ENCODE measurements at regions of chr1 and their contacts with region 1.

Region 1: GRCh38 chr1:9784508-9785133 is 39.1 kb downstream of the CLSTN1 start:
- DNase-seq: peak; percentile 34 to 74
- ATAC-seq: peak; percentile 66 to 72; a peak in 4 of 6 replicates
- H3K4me3 ChIP-seq: no peak overlapping the region
- H3K27ac ChIP-seq: no peak overlapping the region
- H3K4me1 ChIP-seq: peaks cover 9% of the 10 kb centered on the region; the same call in 1 of the 3 replicates
- CTCF ChIP-seq: peak; percentile 68
- EP300 ChIP-seq: no peak
- POLR2A ChIP-seq: no peak
- RAD21 ChIP-seq: peak; percentile 77 to 80

Region 2: DNA sequence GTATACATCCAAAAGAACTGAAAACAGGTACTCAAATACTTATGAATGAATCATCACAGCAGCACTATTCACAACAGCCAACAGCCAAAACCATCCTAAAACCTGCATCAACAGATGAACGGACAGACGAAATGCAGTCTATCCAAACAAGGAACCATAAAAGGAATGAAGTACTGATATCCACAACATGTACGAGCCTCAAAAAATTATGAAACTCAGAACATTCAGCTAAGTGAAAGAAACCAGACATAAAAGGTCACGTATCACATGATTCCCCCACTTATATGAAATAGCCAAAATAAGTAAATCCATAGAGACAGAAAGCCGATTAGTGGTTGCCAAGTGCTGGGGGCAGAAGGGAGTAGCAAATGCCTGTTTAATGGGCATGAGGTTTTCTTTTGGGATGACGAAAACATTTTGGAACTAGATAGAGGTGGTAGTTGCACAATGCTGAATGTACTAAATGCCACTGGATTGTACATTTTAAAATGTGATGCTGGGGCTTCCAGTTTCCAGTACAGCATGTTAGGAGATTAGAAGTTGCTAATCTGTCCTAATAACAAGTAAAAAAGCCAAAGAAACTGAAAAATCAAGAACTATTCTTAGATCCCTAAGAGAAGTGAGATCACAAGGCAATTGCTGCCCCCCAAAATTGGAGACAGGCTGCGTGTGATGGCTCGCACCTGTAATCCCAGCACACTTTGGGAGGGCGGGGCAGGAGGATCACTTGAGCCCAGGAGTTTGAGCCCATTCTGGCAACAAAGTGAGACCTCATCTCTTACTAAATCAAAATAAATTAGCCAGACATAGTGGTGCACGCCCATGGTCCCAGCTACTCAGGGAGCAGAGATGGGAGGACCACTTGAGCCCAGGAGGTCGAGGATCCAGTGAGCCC is 13.9 kb after region 1 on chr1:
- CTCF ChIA-PET with region 1: interaction called, 12 read pairs
- POLR2A ChIA-PET with region 1: no interaction called
- DNase-seq: no peak
- ATAC-seq: no peak
- H3K4me3 ChIP-seq: no peak overlapping the region
- H3K27ac ChIP-seq: no peak overlapping the region
- H3K4me1 ChIP-seq: peaks cover 40% of the 10 kb centered on the region
- CTCF ChIP-seq: no peak
- EP300 ChIP-seq: no peak
- POLR2A ChIP-seq: no peak
- RAD21 ChIP-seq: no peak

Region 3: GRCh38 chr1:9861360-9861759 is 76.7 kb after region 1 on chr1:
- CTCF ChIA-PET with region 1: interaction called, 42 read pairs
- POLR2A ChIA-PET with region 1: no interaction called
- DNase-seq: no peak
- ATAC-seq: peak in 1 of 2 experiments; percentile 46; a peak in 1 of 6 replicates
- H3K4me3 ChIP-seq: no peak overlapping the region
- H3K27ac ChIP-seq: no peak overlapping the region
- H3K4me1 ChIP-seq: no peaks in the 10 kb centered on the region
- CTCF ChIP-seq: no peak
- EP300 ChIP-seq: no peak
- POLR2A ChIP-seq: no peak
- RAD21 ChIP-seq: no peak

Region 4: GRCh38 chr1:9867408-9868243 is 83.0 kb after region 1 on chr1:
- CTCF ChIA-PET with region 1: interaction called, 42 read pairs
- POLR2A ChIA-PET with region 1: no interaction called
- DNase-seq: peak; percentile 57 to 72
- ATAC-seq: peak; percentile 92 to 97
- H3K4me3 ChIP-seq: no peak overlapping the region
- H3K27ac ChIP-seq: 0 out of 6 replicates have a peak overlapping the region, but pooled peaks of 1 of the 2 experiments have one; percentile 32
- H3K4me1 ChIP-seq: no peaks in the 10 kb centered on the region
- CTCF ChIP-seq: peak; percentile 81
- EP300 ChIP-seq: no peak
- POLR2A ChIP-seq: no peak
- RAD21 ChIP-seq: peak; percentile 94 to 97

Measured in A549 (cell line).